CD8-positive, alpha-beta T cell (primary cell): ENCODE measurements at regions of chr5 and their contacts with region 1.

Region 1: GRCh38 chr5:131944702-131945550 is 537 bp downstream of the MEIKIN start:
- DNase-seq: peak in 1 of 9 experiments; percentile 9
- ATAC-seq: no peak
- H3K4me3 ChIP-seq: no peak overlapping the region
- H3K4me3 Mint-ChIP-seq: no peak overlapping the region
- H3K27ac ChIP-seq: no peak overlapping the region
- H3K27ac Mint-ChIP-seq: no peak overlapping the region
- H3K4me1 ChIP-seq: no peaks in the 10 kb centered on the region
- H3K4me1 Mint-ChIP-seq: no peaks in the 10 kb centered on the region
- H3K27me3 ChIP-seq: no peaks in the 10 kb centered on the region
- H3K27me3 Mint-ChIP-seq: no peaks in the 10 kb centered on the region
- CTCF ChIP-seq: no peak

Region 2: GRCh38 chr5:131825404-131826013 is 119.4 kb before region 1 on chr5:
- CTCF ChIA-PET with region 1: no interaction called
- POLR2A ChIA-PET with region 1: interaction called, 3 read pairs
- intact Hi-C with region 1: loop called in 1 of 2 experiments (anchors 10 kb)
- DNase-seq: no peak
- ATAC-seq: no peak
- H3K4me3 ChIP-seq: no peak overlapping the region
- H3K4me3 Mint-ChIP-seq: no peak overlapping the region
- H3K27ac ChIP-seq: no peak overlapping the region
- H3K27ac Mint-ChIP-seq: no peak overlapping the region
- H3K4me1 ChIP-seq: no peaks in the 10 kb centered on the region
- H3K4me1 Mint-ChIP-seq: peaks cover 5% of the 10 kb centered on the region
- H3K27me3 ChIP-seq: no peaks in the 10 kb centered on the region
- H3K27me3 Mint-ChIP-seq: peaks cover 2% of the 10 kb centered on the region
- CTCF ChIP-seq: no peak